Activated B cell treated with CpG ODN at 0.5 μM for 24 hours (primary cell): ENCODE measurements at regions of chr18 and their contacts with region 1.

Region 1: GRCh38 chr18:58241877-58242276 is 197.9 kb downstream of the NEDD4L start:
- DNase-seq: no peak
- ATAC-seq: no peak
- H3K4me3 Mint-ChIP-seq: no peak overlapping the region
- H3K27ac Mint-ChIP-seq: no peak overlapping the region
- H3K4me1 Mint-ChIP-seq: no peaks in the 10 kb centered on the region
- H3K27me3 Mint-ChIP-seq: no peaks in the 10 kb centered on the region
- CTCF ChIP-seq: no peak

Region 2: GRCh38 chr18:57754577-57755338 is 487.1 kb before region 1 on chr18:
- CTCF ChIA-PET with region 1: no interaction called
- POLR2A ChIA-PET with region 1: no interaction called
- intact Hi-C with region 1: no loop called
- DNase-seq: no peak
- ATAC-seq: no peak
- H3K4me3 Mint-ChIP-seq: no peak overlapping the region
- H3K27ac Mint-ChIP-seq: no peak overlapping the region
- H3K4me1 Mint-ChIP-seq: peaks cover 17% of the 10 kb centered on the region
- H3K27me3 Mint-ChIP-seq: no peaks in the 10 kb centered on the region
- CTCF ChIP-seq: no peak

Region 3: DNA sequence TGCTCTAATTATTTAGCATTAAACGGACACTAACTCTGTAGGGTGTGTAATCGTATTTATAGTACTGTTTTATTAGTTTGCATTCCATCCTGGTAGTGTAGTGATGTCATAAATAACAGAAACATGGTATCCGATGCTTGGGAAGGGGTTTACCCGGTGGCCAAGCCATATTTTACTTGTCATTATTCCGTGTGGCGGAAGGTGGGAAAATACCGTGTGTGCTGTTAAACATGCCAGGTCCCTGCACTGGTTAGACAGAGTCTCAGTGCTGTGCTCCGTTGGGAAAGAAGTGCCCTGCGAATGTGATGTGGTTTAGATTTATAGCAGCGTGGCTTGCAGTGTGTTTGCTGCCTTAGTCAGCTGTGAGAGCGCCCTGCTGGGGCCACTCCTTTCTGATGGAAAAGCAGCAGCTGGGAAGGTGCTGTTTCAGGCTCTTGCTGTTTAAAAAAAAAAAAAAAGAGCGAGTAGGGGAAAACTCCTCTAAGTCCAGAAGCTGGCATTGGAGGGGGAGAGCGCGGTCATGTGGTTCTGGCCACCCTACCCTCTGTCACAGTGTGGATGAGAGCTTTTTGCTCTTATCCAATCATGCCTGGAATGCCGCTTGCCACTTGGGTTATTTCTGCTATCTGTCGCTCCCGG is 13.1 kb after region 1 on chr18:
- CTCF ChIA-PET with region 1: no interaction called
- POLR2A ChIA-PET with region 1: no interaction called
- intact Hi-C with region 1: no loop called
- DNase-seq: no peak
- ATAC-seq: no peak
- H3K4me3 Mint-ChIP-seq: no peak overlapping the region
- H3K27ac Mint-ChIP-seq: no peak overlapping the region
- H3K4me1 Mint-ChIP-seq: peaks cover 10% of the 10 kb centered on the region
- H3K27me3 Mint-ChIP-seq: no peaks in the 10 kb centered on the region
- CTCF ChIP-seq: no peak

Region 4: GRCh38 chr18:58276789-58277739 is 35.2 kb after region 1 on chr18:
- CTCF ChIA-PET with region 1: no interaction called
- POLR2A ChIA-PET with region 1: no interaction called
- intact Hi-C with region 1: loop called (anchors 5 kb)
- DNase-seq: no peak
- ATAC-seq: no peak
- H3K4me3 Mint-ChIP-seq: no peak overlapping the region
- H3K27ac Mint-ChIP-seq: no peak overlapping the region
- H3K4me1 Mint-ChIP-seq: peaks cover 7% of the 10 kb centered on the region
- H3K27me3 Mint-ChIP-seq: no peaks in the 10 kb centered on the region
- CTCF ChIP-seq: no peak